ENCODE measurements at regions of chr1 and their contacts with region 1.

Region 1: GRCh38 chr1:151399890-151400495 is 620 bp downstream of the PSMB4 start:
- DNase-seq: peak; percentile 40
- H3K4me3 Mint-ChIP-seq: peak overlapping the region; percentile 89
- H3K27ac Mint-ChIP-seq: peak overlapping the region; percentile 97
- H3K4me1 Mint-ChIP-seq: peaks cover 35% of the 10 kb centered on the region
- H3K27me3 Mint-ChIP-seq: no peaks in the 10 kb centered on the region

Region 2: GRCh38 chr1:151346769-151347522 is 53.0 kb before region 1 on chr1 and contains the start of gene RFX5:
- CTCF ChIA-PET with region 1: interaction called, 5 read pairs
- POLR2A ChIA-PET with region 1: interaction called, 11 read pairs
- DNase-seq: peak; percentile 96
- H3K4me3 Mint-ChIP-seq: peak within 1 kb of the TSS; percentile 88
- H3K27ac Mint-ChIP-seq: peak within 1 kb of the TSS; percentile 94
- H3K4me1 Mint-ChIP-seq: peaks cover 39% of the 10 kb centered on the region
- H3K27me3 Mint-ChIP-seq: no peaks in the 10 kb centered on the region
- total RNA-seq, gene RFX5: 96.2 to 99.3 TPM

Region 3: DNA sequence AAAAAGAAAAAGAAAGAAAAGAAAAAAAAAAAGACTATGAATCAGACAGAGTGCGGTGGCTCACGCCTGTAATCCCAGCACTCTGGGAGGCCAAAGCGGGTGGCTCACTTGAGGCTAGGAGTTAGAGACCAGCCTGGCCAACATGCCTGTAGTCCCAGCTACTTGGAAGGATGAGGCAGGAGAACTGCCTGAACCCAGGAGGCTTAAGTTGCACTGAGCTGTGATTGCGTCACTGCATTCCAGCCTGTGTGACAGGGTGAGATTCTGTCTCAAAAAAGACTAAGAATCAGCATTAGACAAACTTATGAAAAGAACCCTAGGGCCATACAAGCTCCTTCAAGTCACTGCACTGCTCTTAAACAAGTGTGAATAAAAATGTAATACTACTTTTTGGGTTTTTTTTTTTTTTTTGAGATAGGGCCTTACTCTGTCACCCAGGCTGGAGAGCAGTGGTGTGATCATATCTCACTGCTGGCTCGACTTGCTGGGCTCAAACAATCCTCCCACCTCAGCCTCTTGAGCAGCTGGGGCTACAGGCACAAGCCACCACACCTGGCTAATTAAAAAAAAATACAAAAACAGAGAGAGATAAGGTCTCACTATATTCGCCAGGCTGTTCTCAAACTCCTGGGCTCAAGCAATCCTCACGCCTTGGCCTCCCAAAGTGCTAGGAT is 16.4 kb after region 1 on chr1:
- CTCF ChIA-PET with region 1: interaction called, 5 read pairs
- POLR2A ChIA-PET with region 1: interaction called, 13 read pairs
- DNase-seq: no peak
- H3K4me3 Mint-ChIP-seq: no peak overlapping the region
- H3K27ac Mint-ChIP-seq: no peak overlapping the region
- H3K4me1 Mint-ChIP-seq: no peaks in the 10 kb centered on the region
- H3K27me3 Mint-ChIP-seq: no peaks in the 10 kb centered on the region

Region 4: GRCh38 chr1:151641229-151641628 is 241.2 kb after region 1 on chr1:
- CTCF ChIA-PET with region 1: no interaction called
- POLR2A ChIA-PET with region 1: no interaction called
- DNase-seq: no peak
- H3K4me3 Mint-ChIP-seq: no peak overlapping the region
- H3K27ac Mint-ChIP-seq: no peak overlapping the region
- H3K4me1 Mint-ChIP-seq: peaks cover 4% of the 10 kb centered on the region
- H3K27me3 Mint-ChIP-seq: no peaks in the 10 kb centered on the region

Measured in activated CD4-positive, alpha-beta memory T cell treated with anti-CD3 and anti-CD28 coated beads, Interleukin-2, amount 10 ng/mL, durations not matched to agents 7 days and 5 days (primary cell).